Activated CD4-positive, alpha-beta T cell treated with anti-CD3 and anti-CD28 coated beads for 36 hours (primary cell): ENCODE measurements at regions of chr20 and their contacts with region 1.

Region 1: GRCh38 chr20:50546729-50547314 is 36.6 kb downstream of the PTPN1 start:
- DNase-seq: peak; percentile 57
- ATAC-seq: peak; percentile 61
- H3K4me3 Mint-ChIP-seq: peak overlapping the region; percentile 67
- H3K27ac Mint-ChIP-seq: peak overlapping the region; percentile 95
- H3K4me1 Mint-ChIP-seq: peaks cover 72% of the 10 kb centered on the region
- H3K27me3 Mint-ChIP-seq: no peaks in the 10 kb centered on the region

Region 2: GRCh38 chr20:50561379-50562078 is 14.7 kb after region 1 on chr20:
- CTCF ChIA-PET with region 1: interaction called, 9 read pairs
- POLR2A ChIA-PET with region 1: interaction called, 18 read pairs
- intact Hi-C with region 1: loop called (anchors 1 kb)
- DNase-seq: peak; percentile 85
- ATAC-seq: peak; percentile 84
- H3K4me3 Mint-ChIP-seq: peak overlapping the region; percentile 76
- H3K27ac Mint-ChIP-seq: peak overlapping the region; percentile 99
- H3K4me1 Mint-ChIP-seq: peaks cover 85% of the 10 kb centered on the region
- H3K27me3 Mint-ChIP-seq: no peaks in the 10 kb centered on the region

Region 3: DNA sequence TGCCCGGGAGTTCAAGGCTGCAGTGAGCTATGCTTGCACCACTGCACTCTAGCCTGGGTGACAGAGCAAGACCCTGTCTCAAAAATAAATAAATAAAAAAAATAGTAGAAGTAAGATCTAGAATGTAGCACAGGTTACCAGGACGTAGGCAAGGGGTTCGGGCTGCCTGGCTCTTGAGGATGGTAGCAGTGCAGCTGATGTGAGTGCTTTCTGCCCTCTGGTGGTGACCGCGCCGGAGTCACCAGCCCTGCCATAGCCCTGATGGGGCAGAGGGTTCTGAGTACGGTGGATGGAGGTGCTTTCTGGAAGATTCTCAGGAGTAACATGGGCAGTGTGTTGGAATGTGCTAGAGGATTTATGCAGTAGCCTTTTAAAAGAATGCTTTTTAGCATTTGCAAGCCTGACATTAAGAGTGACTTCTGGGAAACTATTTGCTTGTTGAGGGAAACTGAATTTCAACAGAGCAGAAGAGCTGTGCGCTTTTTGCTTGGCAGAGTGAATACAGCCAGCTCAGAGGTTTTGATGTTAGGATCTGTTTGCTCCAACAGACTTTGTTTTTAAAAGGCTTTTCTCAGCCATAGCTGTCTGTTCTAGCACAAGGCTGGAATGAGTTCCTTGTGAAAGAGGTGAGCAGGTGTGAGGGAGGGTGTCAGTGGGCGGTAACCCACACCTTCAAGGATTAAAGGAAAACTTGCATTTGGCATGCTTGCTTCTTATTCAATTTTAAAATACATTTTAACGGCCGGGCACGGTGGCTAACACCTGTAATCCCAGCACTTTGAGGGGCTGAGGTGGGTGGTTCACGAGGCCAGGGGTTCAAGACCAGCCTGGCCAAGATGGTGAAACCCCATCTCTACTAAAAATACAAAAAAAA is 29.3 kb after region 1 on chr20:
- CTCF ChIA-PET with region 1: interaction called, 10 read pairs
- POLR2A ChIA-PET with region 1: no interaction called
- intact Hi-C with region 1: no loop called
- DNase-seq: peak; percentile 83
- ATAC-seq: peak; percentile 89
- H3K4me3 Mint-ChIP-seq: no peak overlapping the region
- H3K27ac Mint-ChIP-seq: peak overlapping the region; percentile 16
- H3K4me1 Mint-ChIP-seq: peaks cover 44% of the 10 kb centered on the region
- H3K27me3 Mint-ChIP-seq: no peaks in the 10 kb centered on the region